OCI-LY7 (cell line): ENCODE measurements at regions of chr15 and their contacts with region 1.

Region 1: GRCh38 chr15:100341662-100342560 is at the start of gene ADAMTS17:
- DNase-seq: peak; percentile 90
- H3K4me3 ChIP-seq: peak within 1 kb of the TSS; percentile 69
- H3K27ac ChIP-seq: no peak within 1 kb of the TSS
- H3K4me1 ChIP-seq: no peaks in the 10 kb centered on the region
- CTCF ChIP-seq: peak; percentile 82
- total RNA-seq, gene ADAMTS17: 0.28 TPM in 1 of 2 replicates, not detected in the other

Region 2: GRCh38 chr15:99931703-99932603 is 410.0 kb before region 1 on chr15:
- CTCF ChIA-PET with region 1: no interaction called
- POLR2A ChIA-PET with region 1: no interaction called
- intact Hi-C with region 1: loop called (anchors 5 kb)
- DNase-seq: no peak
- H3K4me3 ChIP-seq: no peak overlapping the region
- H3K27ac ChIP-seq: no peak overlapping the region
- H3K4me1 ChIP-seq: no peaks in the 10 kb centered on the region
- CTCF ChIP-seq: no peak

Region 3: DNA sequence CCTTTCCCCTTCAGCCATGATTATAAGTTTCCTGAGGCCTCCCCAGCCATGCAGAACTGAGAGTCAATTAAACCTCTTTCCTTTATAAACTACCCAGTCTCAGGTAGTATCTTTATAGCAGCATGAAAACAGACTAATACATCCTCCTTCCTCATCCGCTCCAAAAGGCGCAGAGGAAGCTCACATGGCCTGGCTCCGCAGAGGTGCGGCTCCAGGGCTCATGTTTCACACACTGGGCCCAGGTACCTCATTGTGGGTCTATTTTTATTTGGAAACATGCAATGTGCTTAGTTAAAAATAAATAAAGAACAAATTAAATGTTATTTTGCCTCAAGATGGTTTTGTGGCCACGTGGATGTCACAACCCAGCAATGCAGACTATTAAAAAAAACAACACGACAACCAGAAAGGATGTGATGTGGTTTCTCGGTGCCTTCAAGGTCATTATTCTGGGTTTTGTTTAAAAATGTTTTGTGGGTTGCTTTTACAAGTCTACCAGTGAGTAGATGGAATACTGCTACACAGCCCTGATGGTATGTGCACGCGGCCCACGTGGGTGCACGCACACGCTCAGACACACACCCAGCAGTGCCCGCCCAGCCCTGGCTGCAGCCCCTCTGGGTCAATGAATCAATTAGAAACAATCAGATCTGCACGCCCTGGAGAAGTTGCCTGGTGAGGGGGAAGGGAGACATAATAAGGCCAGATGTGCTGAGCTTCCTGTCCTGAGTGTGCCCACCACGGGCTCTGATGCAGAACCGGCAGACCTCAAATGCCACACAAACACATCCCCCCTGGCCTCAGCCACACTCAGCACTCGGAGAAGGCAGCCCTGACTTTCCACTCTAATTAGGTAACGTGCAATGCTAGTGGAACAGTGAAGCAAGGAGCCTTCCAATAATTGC is 140.3 kb before region 1 on chr15:
- CTCF ChIA-PET with region 1: no interaction called
- POLR2A ChIA-PET with region 1: no interaction called
- intact Hi-C with region 1: loop called (anchors 10 kb)
- DNase-seq: peak; percentile 83
- H3K4me3 ChIP-seq: peak overlapping the region; percentile 35
- H3K27ac ChIP-seq: peak overlapping the region; percentile 77
- H3K4me1 ChIP-seq: peaks cover 40% of the 10 kb centered on the region
- CTCF ChIP-seq: no peak

Region 4: GRCh38 chr15:100572362-100572983 is 230.6 kb after region 1 on chr15:
- CTCF ChIA-PET with region 1: no interaction called
- POLR2A ChIA-PET with region 1: interaction called, 3 read pairs
- intact Hi-C with region 1: loop called (anchors 2 kb)
- DNase-seq: peak; percentile 42
- H3K4me3 ChIP-seq: no peak overlapping the region
- H3K27ac ChIP-seq: no peak overlapping the region
- H3K4me1 ChIP-seq: no peaks in the 10 kb centered on the region
- CTCF ChIP-seq: peak; percentile 82

Region 5: DNA sequence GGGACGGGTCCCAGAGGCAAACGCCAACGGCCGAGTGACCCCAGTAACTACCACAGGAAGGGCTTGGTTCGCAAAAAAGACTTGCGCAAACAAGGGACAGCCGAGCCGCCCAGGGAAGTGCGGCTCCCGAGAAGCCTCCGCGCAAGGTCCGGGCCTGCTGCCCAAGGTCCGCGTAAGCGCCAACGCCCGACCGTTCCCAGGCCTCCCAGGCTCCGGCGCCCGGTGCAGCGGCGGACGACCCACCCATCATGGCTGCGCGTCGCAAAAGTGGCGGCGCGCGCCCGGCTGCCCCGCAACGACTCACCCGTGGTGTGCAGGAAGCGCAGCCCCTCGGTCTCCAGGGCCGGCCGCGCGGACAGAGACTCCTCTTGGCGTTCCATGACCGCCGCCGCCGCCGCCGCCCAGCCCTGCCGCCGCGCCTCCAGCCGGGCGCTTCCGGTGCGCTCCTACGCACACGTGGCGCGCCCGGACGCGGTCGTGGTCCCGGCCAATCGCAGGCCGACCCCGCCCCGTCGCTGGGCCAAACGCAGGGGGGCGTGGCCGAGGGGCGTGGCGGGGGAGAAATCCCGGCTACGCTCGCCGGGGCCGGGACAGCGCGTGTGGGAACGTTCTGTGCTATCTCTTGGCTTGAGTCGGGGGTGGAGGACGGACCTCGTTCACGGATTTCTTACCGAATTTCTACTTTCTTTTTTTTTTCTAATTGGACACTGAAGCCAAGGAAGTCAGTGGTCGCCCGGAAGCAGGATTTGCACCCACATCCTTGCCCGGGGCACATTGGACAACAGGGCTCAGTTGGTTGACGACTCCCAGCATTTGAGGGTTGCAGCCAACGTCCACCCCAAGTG is 935.3 kb after region 1 on chr15 and contains the start of gene SELENOS:
- CTCF ChIA-PET with region 1: no interaction called
- POLR2A ChIA-PET with region 1: no interaction called
- intact Hi-C with region 1: no loop called
- DNase-seq: peak; percentile 92
- H3K4me3 ChIP-seq: peak within 1 kb of the TSS; percentile 98
- H3K27ac ChIP-seq: peak within 1 kb of the TSS; percentile 38
- H3K4me1 ChIP-seq: peaks cover 14% of the 10 kb centered on the region
- CTCF ChIP-seq: no peak
- total RNA-seq, gene SELENOS: 29.1 and 31.1 TPM in 2 replicates